A673 (cell line): ENCODE measurements at regions of chr3 and their contacts with region 1.

Region 1: DNA sequence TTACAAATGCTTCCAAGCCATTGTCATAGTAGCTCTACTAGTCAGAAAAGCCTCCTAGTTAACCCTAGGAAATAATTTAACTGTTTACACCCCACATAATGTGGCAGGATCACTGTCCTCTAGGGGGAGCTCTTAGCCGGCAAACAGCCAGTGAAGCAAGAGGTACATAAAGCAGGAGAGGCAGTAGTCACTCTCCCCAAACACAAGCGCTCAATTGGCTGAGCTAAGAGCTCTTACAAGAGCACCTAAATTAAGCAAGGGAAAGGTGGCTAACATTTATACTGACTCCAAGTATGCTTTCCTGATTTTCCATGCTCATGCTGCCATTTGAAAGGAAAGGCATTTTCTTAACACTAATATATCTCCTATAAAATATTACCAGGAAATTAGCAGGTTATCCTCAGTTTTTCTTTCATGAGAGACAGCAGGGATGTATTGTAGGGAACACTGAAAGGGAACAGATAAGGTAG is 37.6 kb downstream of the NCEH1 start:
- DNase-seq: peak; percentile 78
- H3K4me3 ChIP-seq: no peak overlapping the region
- H3K27ac ChIP-seq: no peak overlapping the region
- H3K4me1 ChIP-seq: no peaks in the 10 kb centered on the region
- H3K27me3 ChIP-seq: no peaks in the 10 kb centered on the region
- CTCF ChIP-seq: peak; percentile 86

Region 2: GRCh38 chr3:172094621-172095557 is 578.4 kb before region 1 on chr3:
- CTCF ChIA-PET with region 1: no interaction called
- POLR2A ChIA-PET with region 1: no interaction called
- intact Hi-C with region 1: no loop called
- DNase-seq: no peak
- H3K4me3 ChIP-seq: no peak overlapping the region
- H3K27ac ChIP-seq: no peak overlapping the region
- H3K4me1 ChIP-seq: peaks cover 18% of the 10 kb centered on the region
- H3K27me3 ChIP-seq: no peaks in the 10 kb centered on the region
- CTCF ChIP-seq: no peak

Region 3: DNA sequence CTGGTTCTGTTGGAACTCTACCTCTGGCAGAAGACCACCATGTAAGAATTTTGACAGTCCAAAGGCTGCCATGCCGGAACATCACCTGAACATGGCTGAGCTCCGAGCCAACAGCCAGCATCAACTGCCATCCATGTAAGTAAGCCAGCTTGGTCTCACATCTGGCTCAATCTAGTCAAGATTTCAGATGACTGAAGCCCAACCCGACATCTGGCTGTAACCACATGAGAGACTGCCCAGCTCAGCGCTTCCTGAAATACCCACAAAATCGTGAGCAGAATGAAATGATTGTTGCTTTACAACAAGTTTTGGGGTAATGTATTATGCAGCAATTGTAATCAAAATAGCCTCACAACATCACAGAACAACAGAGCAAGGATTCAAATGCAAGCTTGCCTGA is 257.9 kb before region 1 on chr3:
- CTCF ChIA-PET with region 1: interaction called, 19 read pairs
- POLR2A ChIA-PET with region 1: no interaction called
- intact Hi-C with region 1: no loop called
- DNase-seq: no peak
- H3K4me3 ChIP-seq: no peak overlapping the region
- H3K27ac ChIP-seq: no peak overlapping the region
- H3K4me1 ChIP-seq: no peaks in the 10 kb centered on the region
- H3K27me3 ChIP-seq: peaks cover 18% of the 10 kb centered on the region
- CTCF ChIP-seq: no peak

Region 4: DNA sequence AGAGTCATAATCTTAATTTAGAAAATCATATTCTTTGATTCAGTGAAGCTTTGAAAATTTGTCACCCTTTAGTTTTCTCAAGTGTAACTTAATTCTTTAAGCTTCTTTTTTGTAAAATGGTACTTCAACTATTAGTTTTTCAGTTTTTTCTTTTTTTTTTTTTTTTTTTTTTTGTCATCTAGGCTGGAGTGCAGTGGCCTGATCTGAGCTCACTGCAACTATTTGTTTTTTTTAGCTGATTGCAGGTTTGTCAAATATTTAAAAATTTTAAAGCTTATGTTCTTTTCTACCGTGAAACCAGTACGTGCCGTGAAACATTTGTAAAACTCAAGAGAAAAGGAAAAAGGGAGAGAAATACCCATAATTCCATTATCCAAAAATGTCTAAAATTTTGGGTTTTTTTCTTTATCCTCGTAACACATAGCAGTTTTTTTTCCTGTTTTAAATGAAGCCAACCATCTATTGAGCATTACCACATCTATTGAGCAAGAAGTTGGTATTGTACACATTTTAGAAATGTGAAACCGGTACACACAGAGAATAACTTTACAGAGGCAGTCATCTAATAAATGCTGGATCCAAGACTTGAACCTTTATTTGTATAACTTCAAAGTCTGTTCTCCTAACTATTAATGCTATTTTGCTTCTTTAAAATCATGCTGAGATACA is 102.9 kb after region 1 on chr3:
- CTCF ChIA-PET with region 1: no interaction called
- POLR2A ChIA-PET with region 1: no interaction called
- intact Hi-C with region 1: no loop called
- DNase-seq: no peak
- H3K4me3 ChIP-seq: no peak overlapping the region
- H3K27ac ChIP-seq: no peak overlapping the region
- H3K4me1 ChIP-seq: no peaks in the 10 kb centered on the region
- H3K27me3 ChIP-seq: no peaks in the 10 kb centered on the region
- CTCF ChIP-seq: no peak